ENCODE measurements at regions of chr21 and their contacts with region 1.

Region 1: GRCh38 chr21:42973991-42974831 is at the start of gene PKNOX1:
- DNase-seq: peak; percentile 99
- ATAC-seq: peak; percentile 96
- total RNA-seq, gene PKNOX1: 23.1 TPM

Region 2: GRCh38 chr21:42923541-42924432 is 50.4 kb before region 1 on chr21:
- intact Hi-C with region 1: loop called (anchors 5 kb)
- DNase-seq: peak; percentile 78
- ATAC-seq: peak; percentile 93

Region 3: GRCh38 chr21:43211072-43211759 is 237.0 kb after region 1 on chr21:
- intact Hi-C with region 1: no loop called
- DNase-seq: peak; percentile 58
- ATAC-seq: peak; percentile 68